Activated T-helper 2 cell treated with anti-CD3 and anti-CD28 coated beads, Interferon-gamma antibody, Interleukin-2, Interleukin-4, amounts not matched to agents 10 μg/mL and 5 μg/mL and 100 μg/mL, durations not matched to agents 14 hours and 24 hours and 36 hours (primary cell): ENCODE measurements at regions of chr12 and their contacts with region 1.

Region 1: GRCh38 chr12:1594261-1595025 is at the start of gene FBXL14:
- DNase-seq: peak; percentile 86
- H3K4me3 Mint-ChIP-seq: peak within 1 kb of the TSS; percentile 92
- H3K27ac Mint-ChIP-seq: peak within 1 kb of the TSS; percentile 89
- H3K4me1 Mint-ChIP-seq: peaks cover 47% of the 10 kb centered on the region
- H3K27me3 Mint-ChIP-seq: no peaks in the 10 kb centered on the region
- total RNA-seq, gene FBXL14: 18.9 and 20.6 TPM in 2 replicates

Region 2: DNA sequence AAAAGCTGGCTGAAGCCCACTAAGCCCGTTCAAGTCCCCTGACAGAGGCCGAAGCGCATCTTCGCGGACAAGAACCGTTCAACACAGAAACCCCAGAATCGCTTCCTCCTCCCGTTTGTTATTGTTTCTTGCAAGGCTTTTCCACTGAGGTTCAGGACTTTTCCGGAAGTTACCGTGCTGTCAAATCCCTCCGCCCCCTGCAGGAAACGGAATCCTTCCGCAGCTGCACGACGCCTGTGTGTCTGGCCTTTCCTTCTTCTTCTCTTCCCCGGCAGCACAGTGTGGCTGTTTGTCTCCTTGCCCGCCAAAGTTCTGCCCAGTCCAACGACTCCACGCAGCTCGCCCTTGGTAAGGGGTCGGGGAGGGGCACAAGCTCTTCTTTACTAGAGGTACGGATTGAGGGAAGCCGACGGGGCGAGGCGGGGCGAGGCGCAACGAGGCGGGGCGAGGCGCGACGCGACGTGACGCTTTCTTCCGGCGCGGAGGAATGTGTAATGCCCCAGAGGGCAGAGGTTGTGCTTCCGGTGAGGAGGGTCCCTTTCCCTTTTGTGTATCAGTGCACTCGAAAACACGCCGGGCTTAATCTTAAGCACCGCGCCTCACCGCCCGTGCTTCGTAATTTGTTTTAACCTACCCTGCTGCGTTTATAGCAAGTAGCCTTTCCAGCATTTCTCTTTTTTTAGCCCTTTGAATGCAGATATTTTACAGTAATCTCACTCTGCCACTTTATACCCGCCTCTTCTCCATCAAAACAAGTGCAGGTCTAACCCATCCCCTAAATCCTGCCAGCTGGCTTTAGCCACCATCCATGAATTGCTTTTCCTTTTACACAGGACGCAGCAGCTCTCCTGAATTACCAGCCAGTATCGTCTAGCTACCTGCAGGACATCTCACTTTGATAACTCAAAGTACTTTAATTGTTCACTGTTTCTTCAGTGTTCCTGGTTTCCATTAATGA is 1205.0 kb before region 1 on chr12 and contains the start of gene KDM5A:
- intact Hi-C with region 1: loop called (anchors 5 kb)
- DNase-seq: peak; percentile 86
- H3K4me3 Mint-ChIP-seq: peak within 1 kb of the TSS; percentile 94
- H3K27ac Mint-ChIP-seq: peak within 1 kb of the TSS; percentile 95
- H3K4me1 Mint-ChIP-seq: peaks cover 24% of the 10 kb centered on the region
- H3K27me3 Mint-ChIP-seq: no peaks in the 10 kb centered on the region
- total RNA-seq, gene KDM5A: 76.4 and 77.9 TPM in 2 replicates

Region 3: DNA sequence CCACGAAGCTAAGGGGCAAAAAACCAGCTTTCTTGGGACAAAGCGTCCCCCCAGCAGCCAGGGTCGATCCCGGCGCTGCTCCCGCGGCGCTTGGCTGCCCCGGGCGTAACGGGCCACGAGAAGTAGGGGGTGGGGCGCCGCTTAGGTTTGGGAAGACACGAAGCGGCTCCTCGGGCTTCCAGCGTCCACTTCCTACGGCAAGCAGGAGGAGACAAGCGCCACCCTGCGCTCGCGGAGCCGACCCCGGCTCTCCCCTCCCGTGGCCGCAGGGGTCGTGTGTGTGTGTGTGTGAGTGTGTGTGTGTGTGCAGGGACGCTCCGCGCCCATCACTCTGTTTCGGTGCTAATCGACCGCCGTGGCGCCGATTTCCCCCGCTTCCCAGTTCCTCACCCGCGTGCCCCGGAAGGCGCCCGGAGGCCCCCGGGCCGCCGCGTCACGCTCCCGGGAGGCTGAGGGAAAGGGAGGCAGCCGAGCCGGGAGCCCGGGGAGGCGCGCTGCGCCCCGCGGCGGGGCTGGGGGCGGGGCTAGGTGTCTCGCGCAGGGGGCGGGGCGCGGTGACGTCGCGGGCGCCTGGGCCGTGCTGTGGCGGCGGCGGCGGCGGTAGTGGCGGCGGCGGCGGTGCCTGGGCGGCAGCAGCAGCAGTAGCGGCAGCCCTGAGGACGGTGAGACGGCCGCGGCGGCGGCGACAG is 603.6 kb before region 1 on chr12 and contains the start of gene ERC1:
- intact Hi-C with region 1: loop called (anchors 5 kb)
- DNase-seq: peak; percentile 83
- H3K4me3 Mint-ChIP-seq: peak within 1 kb of the TSS; percentile 95
- H3K27ac Mint-ChIP-seq: peak within 1 kb of the TSS; percentile 93
- H3K4me1 Mint-ChIP-seq: peaks cover 35% of the 10 kb centered on the region
- H3K27me3 Mint-ChIP-seq: no peaks in the 10 kb centered on the region
- total RNA-seq, gene ERC1: 37.5 and 42.6 TPM in 2 replicates

Region 4: GRCh38 chr12:1474041-1474573 is 120.3 kb before region 1 on chr12:
- intact Hi-C with region 1: loop called (anchors 5 kb)
- DNase-seq: peak; percentile 21
- H3K4me3 Mint-ChIP-seq: no peak overlapping the region
- H3K27ac Mint-ChIP-seq: no peak overlapping the region
- H3K4me1 Mint-ChIP-seq: peaks cover 10% of the 10 kb centered on the region
- H3K27me3 Mint-ChIP-seq: no peaks in the 10 kb centered on the region

Region 5: GRCh38 chr12:1533602-1534304 is 60.7 kb before region 1 on chr12:
- intact Hi-C with region 1: loop called (anchors 5 kb)
- DNase-seq: peak; percentile 54
- H3K4me3 Mint-ChIP-seq: peak overlapping the region; percentile 60
- H3K27ac Mint-ChIP-seq: peak overlapping the region; percentile 23
- H3K4me1 Mint-ChIP-seq: peaks cover 28% of the 10 kb centered on the region
- H3K27me3 Mint-ChIP-seq: peaks cover 60% of the 10 kb centered on the region

Region 6: DNA sequence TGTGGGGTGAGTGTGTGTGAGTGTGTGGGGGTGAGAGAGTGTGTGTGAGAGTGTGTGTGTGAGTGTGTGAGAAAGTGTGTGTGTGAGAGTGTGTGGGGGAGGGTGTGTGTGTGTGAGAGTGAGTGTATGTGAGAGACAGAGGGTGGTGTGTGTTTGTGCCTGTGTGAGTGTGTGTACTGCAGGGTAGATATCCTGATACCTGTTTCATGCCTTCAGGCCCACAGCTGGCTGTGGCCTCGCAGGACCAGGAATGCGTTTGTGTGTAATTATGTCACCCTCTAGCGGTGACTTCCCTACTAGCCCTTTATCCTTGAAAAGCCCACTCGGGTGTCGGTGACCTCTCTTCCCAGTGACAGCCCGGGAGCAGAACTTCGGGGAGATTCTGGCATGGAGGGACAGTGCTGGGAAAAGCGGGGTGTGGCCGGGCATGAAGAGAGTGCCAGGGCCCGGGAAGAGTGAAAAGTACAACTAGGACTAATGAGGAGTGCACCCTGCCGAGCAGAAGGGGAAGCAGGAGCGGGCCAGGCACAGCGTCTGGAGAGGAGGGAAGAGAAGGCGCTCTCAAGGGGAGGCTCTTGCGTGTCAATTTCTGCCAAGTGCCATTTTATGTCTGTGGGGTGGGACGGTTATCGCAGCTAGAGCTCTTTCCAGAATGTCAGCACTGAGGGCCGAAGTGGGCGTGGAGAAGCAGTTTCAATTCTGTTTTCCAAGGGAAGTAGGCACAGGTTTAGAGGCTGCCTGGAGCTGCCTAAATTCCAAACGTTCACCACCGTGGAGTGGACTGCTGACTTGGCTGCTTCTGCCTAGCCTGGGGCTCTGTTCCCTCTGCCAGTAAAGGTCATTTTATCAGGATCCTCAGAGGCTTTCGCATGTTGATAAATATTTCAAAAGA is 10.9 kb after region 1 on chr12:
- intact Hi-C with region 1: loop called (anchors 1 kb)
- DNase-seq: peak; percentile 48
- H3K4me3 Mint-ChIP-seq: peak overlapping the region; percentile 71
- H3K27ac Mint-ChIP-seq: peak overlapping the region; percentile 15
- H3K4me1 Mint-ChIP-seq: peaks cover 32% of the 10 kb centered on the region
- H3K27me3 Mint-ChIP-seq: peaks cover 5% of the 10 kb centered on the region

Region 7: DNA sequence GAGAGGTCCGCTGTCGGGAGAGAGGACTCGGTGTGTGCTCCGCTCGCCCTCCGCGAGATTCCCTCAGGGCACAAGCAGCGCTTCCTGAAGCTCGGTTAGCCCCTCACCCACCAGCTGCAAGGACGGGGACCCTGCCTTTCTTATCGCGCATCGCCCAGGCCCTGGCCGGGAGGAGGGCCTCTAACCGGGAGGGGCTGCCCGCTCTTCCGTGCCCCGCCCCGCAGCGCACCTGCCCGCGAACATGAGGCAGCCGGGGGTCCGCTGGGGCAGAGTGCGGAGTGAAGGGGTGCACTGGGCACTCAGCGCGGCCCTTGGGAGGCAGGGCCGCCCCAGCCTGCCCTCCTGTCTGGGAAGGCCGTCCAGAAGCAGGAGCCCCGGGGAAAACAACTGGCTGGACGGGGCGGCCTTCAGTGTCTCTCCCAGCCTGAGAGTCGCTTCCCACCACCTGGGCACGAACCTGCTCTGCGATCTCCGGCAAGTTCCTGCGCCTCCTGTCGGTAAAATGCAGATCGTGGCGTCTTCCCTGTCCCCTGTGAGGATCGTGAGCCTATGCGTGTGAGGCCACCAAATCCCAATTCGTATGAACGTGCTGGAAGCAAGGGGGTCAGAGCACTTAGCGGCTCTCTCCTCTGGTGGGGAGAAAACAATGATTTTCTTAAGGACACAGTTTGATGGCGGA is 68.5 kb after region 1 on chr12:
- intact Hi-C with region 1: no loop called
- DNase-seq: no peak
- H3K4me3 Mint-ChIP-seq: peak overlapping the region; percentile 76
- H3K27ac Mint-ChIP-seq: peak overlapping the region; percentile 73
- H3K4me1 Mint-ChIP-seq: peaks cover 41% of the 10 kb centered on the region
- H3K27me3 Mint-ChIP-seq: no peaks in the 10 kb centered on the region